ENCODE measurements at regions of chr18 and their contacts with region 1.

Region 1: DNA sequence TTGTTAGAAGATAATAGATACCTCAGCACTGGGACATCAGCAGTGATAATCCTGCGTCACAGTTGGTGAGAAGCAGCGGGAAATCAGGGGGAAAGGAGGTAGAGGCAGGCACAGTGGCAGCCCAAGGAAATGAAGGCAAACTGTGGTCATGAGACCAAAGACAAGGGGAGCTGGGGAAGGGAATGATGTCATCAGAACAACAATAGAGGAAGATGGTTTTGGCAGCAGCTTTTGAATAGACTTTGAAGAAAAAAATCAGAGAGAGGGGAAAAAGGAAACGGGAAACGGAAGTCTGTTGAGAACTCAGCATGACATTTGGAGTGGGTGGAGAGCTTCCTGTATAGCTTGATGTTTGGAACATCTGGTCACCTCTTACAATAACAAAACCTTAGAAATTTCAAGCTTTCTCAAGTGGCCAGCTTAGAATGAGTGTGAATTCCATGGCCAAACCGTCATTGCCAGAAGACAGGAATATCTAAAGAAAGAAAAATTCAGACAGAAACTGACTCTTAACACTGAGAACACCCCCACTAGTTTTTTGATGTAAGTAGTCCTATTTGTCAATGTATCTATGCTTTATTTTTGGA is 18.4 kb upstream of the YES1 start:
- DNase-seq: no peak
- ATAC-seq: no peak
- H3K4me3 ChIP-seq: no peak overlapping the region; a peak in 1 of 6 replicates
- H3K27ac ChIP-seq: no peak overlapping the region
- H3K4me1 ChIP-seq: peaks cover 52% of the 10 kb centered on the region
- H3K27me3 ChIP-seq: no peaks in the 10 kb centered on the region
- CTCF ChIP-seq: no peak
- EP300 ChIP-seq: no peak
- POLR2A ChIP-seq: no peak
- RAD21 ChIP-seq: no peak

Region 2: GRCh38 chr18:741931-742512 is 88.4 kb before region 1 on chr18:
- CTCF ChIA-PET with region 1: interaction called, 61 read pairs
- POLR2A ChIA-PET with region 1: no interaction called
- in situ Hi-C with region 1: loop called (anchors 5 kb)
- intact Hi-C with region 1: loop called (anchors 1 kb)
- DNase-seq: peak; percentile 36
- ATAC-seq: peak; percentile 77
- H3K4me3 ChIP-seq: no peak overlapping the region
- H3K27ac ChIP-seq: no peak overlapping the region
- H3K4me1 ChIP-seq: no peaks in the 10 kb centered on the region
- H3K27me3 ChIP-seq: no peaks in the 10 kb centered on the region; a peak in 1 of 5 replicates
- CTCF ChIP-seq: peak; percentile 75
- EP300 ChIP-seq: no peak
- POLR2A ChIP-seq: no peak
- RAD21 ChIP-seq: peak; percentile 74

Region 3: GRCh38 chr18:812376-813171 is 17.8 kb before region 1 on chr18:
- CTCF ChIA-PET with region 1: no interaction called
- POLR2A ChIA-PET with region 1: interaction called, 10 read pairs
- in situ Hi-C with region 1: no loop called
- intact Hi-C with region 1: no loop called
- DNase-seq: peak; percentile 78
- ATAC-seq: peak; percentile 92
- H3K4me3 ChIP-seq: peak overlapping the region; percentile 69 to 99 (median 99)
- H3K27ac ChIP-seq: peak overlapping the region; percentile 89
- H3K4me1 ChIP-seq: peaks cover 48% of the 10 kb centered on the region
- H3K27me3 ChIP-seq: no peaks in the 10 kb centered on the region; a peak in 1 of 5 replicates
- CTCF ChIP-seq: no peak
- EP300 ChIP-seq: peak; percentile 17 to 29; a peak in 2 of 4 replicates
- POLR2A ChIP-seq: peak; percentile 69 to 74
- RAD21 ChIP-seq: 0 out of 2 replicates have a peak, but pooled peaks have one; percentile 6

Region 4: GRCh38 chr18:903701-904100 is 73.3 kb after region 1 on chr18:
- CTCF ChIA-PET with region 1: no interaction called
- POLR2A ChIA-PET with region 1: no interaction called
- in situ Hi-C with region 1: no loop called
- intact Hi-C with region 1: no loop called
- DNase-seq: no peak
- ATAC-seq: 0 out of 3 replicates have a peak, but pooled peaks have one; percentile 45
- H3K4me3 ChIP-seq: no peak overlapping the region
- H3K27ac ChIP-seq: no peak overlapping the region
- H3K4me1 ChIP-seq: no peaks in the 10 kb centered on the region
- H3K27me3 ChIP-seq: peaks cover 2 to 44% of the 10 kb centered on the region in 2 experiments; a peak in 4 of 5 replicates
- CTCF ChIP-seq: no peak
- EP300 ChIP-seq: no peak
- POLR2A ChIP-seq: no peak
- RAD21 ChIP-seq: no peak

Measured in HepG2 (cell line).